A549 (cell line): ENCODE measurements at regions of chr15 and their contacts with region 1.

Region 1: DNA sequence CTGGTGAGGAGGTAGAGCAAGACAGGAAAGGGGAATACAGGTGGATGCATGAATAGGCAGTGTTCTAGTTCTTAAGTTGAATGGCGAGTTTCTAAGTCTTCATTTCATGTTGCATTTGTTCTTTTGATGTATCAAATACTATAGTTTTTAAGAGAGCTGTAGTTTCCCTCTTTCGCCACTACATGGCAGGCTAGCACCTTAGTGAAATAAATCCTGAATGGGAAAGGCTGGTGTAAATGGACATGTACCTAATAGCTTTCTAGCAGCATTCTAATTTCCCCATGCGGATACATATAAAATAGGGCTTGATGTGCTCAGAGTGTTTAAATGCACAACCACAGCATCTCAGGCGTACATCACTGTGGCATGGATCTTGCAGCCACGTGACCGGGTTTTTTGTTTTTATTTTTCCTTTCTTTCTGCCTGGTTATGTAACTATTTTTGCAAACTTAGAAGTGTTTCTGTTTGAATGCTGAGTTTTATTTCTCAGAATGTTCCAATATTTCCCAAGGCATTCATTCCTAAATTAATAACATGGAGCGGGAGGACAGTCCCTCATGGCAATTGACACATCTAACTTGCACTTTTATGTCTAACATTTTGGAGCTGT is 23.5 kb upstream of the CLN6 start:
- DNase-seq: peak; percentile 82 to 88
- ATAC-seq: peak; percentile 69 to 74
- H3K4me3 ChIP-seq: no peak overlapping the region
- H3K27ac ChIP-seq: no peak overlapping the region
- H3K4me1 ChIP-seq: peaks cover 12% of the 10 kb centered on the region; the same call in 2 of the 3 replicates
- CTCF ChIP-seq: peak; percentile 96
- EP300 ChIP-seq: no peak
- POLR2A ChIP-seq: no peak
- RAD21 ChIP-seq: peak; percentile 95 to 97

Region 2: GRCh38 chr15:68025835-68026424 is 227.1 kb before region 1 on chr15:
- CTCF ChIA-PET with region 1: no interaction called
- POLR2A ChIA-PET with region 1: no interaction called
- DNase-seq: peak in 1 of 2 experiments; percentile 44
- ATAC-seq: peak in 1 of 2 experiments; percentile 63; a peak in 3 of 6 replicates
- H3K4me3 ChIP-seq: no peak overlapping the region
- H3K27ac ChIP-seq: peak overlapping the region in 1 of 2 experiments; percentile 6; a peak in 1 of 6 replicates
- H3K4me1 ChIP-seq: peaks cover 11% of the 10 kb centered on the region; the same call in 2 of the 3 replicates
- CTCF ChIP-seq: no peak
- EP300 ChIP-seq: no peak
- POLR2A ChIP-seq: no peak
- RAD21 ChIP-seq: no peak

Region 3: DNA sequence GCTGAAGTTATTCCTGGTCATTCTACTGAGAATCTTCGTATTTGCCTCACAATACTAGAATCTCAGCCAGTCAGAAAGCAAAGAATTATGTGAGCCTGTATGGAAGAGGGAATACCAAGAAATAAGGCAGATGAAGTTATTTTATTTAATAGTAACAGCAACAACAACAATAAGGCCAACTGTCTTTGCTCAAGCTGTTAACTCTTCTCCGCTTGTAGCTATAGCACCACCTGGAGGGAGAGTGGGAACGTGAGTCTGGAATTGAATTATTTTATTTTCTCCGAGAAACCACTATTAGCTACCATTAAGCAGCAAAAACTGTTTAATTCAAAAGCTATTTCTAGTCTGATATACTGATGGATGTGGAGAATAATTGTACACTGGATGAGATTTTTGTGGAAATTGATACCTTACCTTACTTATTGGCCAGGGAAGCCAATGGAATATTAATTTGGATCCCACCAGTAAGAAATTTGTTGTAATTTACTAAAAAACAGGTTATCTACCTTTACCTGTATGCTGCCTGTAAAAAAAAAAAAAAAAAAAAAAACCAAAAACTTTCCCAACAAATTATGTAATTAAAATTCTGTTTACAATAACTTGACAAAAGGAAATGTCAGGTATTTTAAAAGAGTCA is 98.0 kb before region 1 on chr15:
- CTCF ChIA-PET with region 1: no interaction called
- POLR2A ChIA-PET with region 1: no interaction called
- DNase-seq: peak; percentile 39 to 77
- ATAC-seq: peak; percentile 81 to 89; a peak in 5 of 6 replicates
- H3K4me3 ChIP-seq: no peak overlapping the region
- H3K27ac ChIP-seq: no peak overlapping the region; a peak in 1 of 6 replicates
- H3K4me1 ChIP-seq: peaks cover 4% of the 10 kb centered on the region; the same call in 1 of the 3 replicates
- CTCF ChIP-seq: peak; percentile 99
- EP300 ChIP-seq: no peak
- POLR2A ChIP-seq: no peak
- RAD21 ChIP-seq: peak; percentile 96 to 97

Region 4: GRCh38 chr15:68241088-68241935 is 11.7 kb before region 1 on chr15:
- CTCF ChIA-PET with region 1: interaction called, 53 read pairs
- POLR2A ChIA-PET with region 1: no interaction called
- DNase-seq: no peak
- ATAC-seq: no peak
- H3K4me3 ChIP-seq: no peak overlapping the region
- H3K27ac ChIP-seq: no peak overlapping the region
- H3K4me1 ChIP-seq: no peaks in the 10 kb centered on the region
- CTCF ChIP-seq: no peak
- EP300 ChIP-seq: no peak
- POLR2A ChIP-seq: no peak
- RAD21 ChIP-seq: no peak

Region 5: GRCh38 chr15:68271854-68272471 is 18.9 kb after region 1 on chr15:
- CTCF ChIA-PET with region 1: interaction called, 86 read pairs
- POLR2A ChIA-PET with region 1: interaction called, 35 read pairs
- DNase-seq: peak; percentile 77 to 86
- ATAC-seq: peak; percentile 80 to 86
- H3K4me3 ChIP-seq: peak overlapping the region; percentile 4; the same call in 1 of the 3 replicates
- H3K27ac ChIP-seq: peak overlapping the region; percentile 75 to 87
- H3K4me1 ChIP-seq: peaks cover 56% of the 10 kb centered on the region
- CTCF ChIP-seq: no peak
- EP300 ChIP-seq: no peak
- POLR2A ChIP-seq: peak; percentile 16; the same call in 1 of the 2 replicates
- RAD21 ChIP-seq: no peak

Region 6: DNA sequence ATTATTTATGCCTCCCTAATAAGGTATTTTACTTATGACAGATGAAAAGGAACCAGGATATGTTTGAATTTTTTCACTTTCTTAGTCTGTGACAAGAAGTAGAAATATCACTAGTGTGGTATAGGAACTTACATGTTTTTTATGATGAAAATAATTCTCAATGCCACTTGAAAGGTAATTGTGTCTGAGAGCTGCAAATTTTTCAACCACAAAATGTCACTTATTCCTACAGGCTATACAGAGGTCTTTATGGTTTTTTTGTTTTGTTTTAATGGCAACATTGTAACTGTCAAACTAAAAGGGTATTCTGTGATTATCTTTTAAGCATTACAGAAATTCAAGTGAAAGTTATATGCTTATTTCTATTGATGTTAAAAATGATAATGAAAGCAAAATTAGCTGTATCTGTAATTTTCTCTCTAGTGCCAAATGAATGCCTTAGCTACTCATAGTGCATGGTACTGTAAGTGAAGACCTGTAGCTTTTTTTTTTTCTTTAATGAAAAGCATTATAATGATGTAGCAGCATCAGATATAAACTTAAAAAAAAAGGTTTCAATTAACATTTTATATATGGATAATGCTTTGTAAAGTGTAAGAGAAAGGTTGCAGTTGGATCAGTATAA is 39.2 kb after region 1 on chr15:
- CTCF ChIA-PET with region 1: interaction called, 19 read pairs
- POLR2A ChIA-PET with region 1: interaction called, 3 read pairs
- DNase-seq: no peak
- ATAC-seq: no peak
- H3K4me3 ChIP-seq: no peak overlapping the region
- H3K27ac ChIP-seq: no peak overlapping the region
- H3K4me1 ChIP-seq: peaks cover 11% of the 10 kb centered on the region; the same call in 2 of the 3 replicates
- CTCF ChIP-seq: no peak
- EP300 ChIP-seq: no peak
- POLR2A ChIP-seq: no peak
- RAD21 ChIP-seq: no peak

Region 7: GRCh38 chr15:68310178-68310803 is 57.3 kb after region 1 on chr15:
- CTCF ChIA-PET with region 1: interaction called, 189 read pairs
- POLR2A ChIA-PET with region 1: interaction called, 3 read pairs
- DNase-seq: no peak
- ATAC-seq: no peak
- H3K4me3 ChIP-seq: no peak overlapping the region
- H3K27ac ChIP-seq: peak overlapping the region; percentile 42 to 72; a peak in 5 of 6 replicates
- H3K4me1 ChIP-seq: peaks cover 32% of the 10 kb centered on the region
- CTCF ChIP-seq: no peak
- EP300 ChIP-seq: no peak
- POLR2A ChIP-seq: no peak
- RAD21 ChIP-seq: no peak

Region 8: DNA sequence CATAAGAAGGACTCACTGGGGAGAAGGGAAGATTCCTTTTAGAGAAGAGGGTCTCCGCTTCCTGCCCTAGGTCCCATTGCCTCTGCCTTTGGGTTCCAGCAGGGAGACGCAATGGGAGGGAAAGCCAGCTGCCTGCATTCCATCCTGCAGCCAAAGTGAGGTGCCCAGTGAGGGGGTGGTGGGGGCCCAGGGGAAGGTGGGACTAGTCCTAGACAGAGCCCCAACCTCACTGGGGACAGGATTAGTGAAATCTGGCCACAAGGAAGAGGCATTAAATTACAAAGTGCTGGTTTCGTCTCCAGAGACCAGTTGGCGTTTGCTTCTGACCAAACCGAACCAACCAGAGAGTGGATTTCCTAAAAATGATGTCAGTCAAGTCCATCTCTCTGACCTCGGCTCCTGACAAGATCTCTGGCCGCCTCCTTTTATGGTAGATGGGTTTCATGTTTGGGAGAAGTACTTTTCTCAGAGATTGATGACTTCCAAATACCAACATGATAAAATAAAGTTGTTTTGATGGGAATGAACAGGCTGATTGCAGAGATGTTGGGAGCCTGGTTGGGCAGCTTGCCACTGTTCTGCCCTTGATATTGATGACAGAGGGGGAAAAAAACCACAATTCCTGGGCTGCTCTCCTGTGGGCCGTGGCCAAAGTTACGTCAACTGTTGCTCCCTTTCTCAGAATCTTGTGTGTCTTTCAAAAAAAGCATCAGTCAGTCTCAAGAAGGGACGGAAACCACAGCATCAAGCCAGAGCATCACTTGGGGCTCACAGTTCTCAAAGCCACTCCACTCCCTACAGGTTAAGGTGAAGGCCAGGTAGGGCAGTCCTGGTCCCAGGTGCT is 154.2 kb after region 1 on chr15:
- CTCF ChIA-PET with region 1: no interaction called
- POLR2A ChIA-PET with region 1: no interaction called
- DNase-seq: no peak
- ATAC-seq: no peak
- H3K4me3 ChIP-seq: no peak overlapping the region
- H3K27ac ChIP-seq: peak overlapping the region in 1 of 2 experiments; percentile 39; a peak in 3 of 6 replicates
- H3K4me1 ChIP-seq: no peaks in the 10 kb centered on the region
- CTCF ChIP-seq: no peak
- EP300 ChIP-seq: no peak
- POLR2A ChIP-seq: no peak
- RAD21 ChIP-seq: no peak